WTC11 (cell line): ENCODE measurements at regions of chrX and their contacts with region 1.

Region 1: GRCh38 chrX:43585922-43586321 is 70.2 kb upstream of the MAOA start:
- DNase-seq: no peak
- ATAC-seq: no peak
- H3K4me3 Mint-ChIP-seq: no peak overlapping the region
- H3K27ac Mint-ChIP-seq: no peak overlapping the region
- H3K4me1 Mint-ChIP-seq: no peaks in the 10 kb centered on the region
- H3K27me3 Mint-ChIP-seq: no peaks in the 10 kb centered on the region; the same call in 1 of the 2 replicates
- CTCF ChIP-seq: no peak

Region 2: GRCh38 chrX:43750248-43750676 is 164.3 kb after region 1 on chrX:
- CTCF ChIA-PET with region 1: interaction called, 13 read pairs
- POLR2A ChIA-PET with region 1: no interaction called
- DNase-seq: peak; percentile 33
- ATAC-seq: peak; percentile 80
- H3K4me3 Mint-ChIP-seq: no peak overlapping the region
- H3K27ac Mint-ChIP-seq: no peak overlapping the region
- H3K4me1 Mint-ChIP-seq: no peaks in the 10 kb centered on the region
- H3K27me3 Mint-ChIP-seq: no peaks in the 10 kb centered on the region; the same call in 1 of the 2 replicates
- CTCF ChIP-seq: no peak